ENCODE measurements at regions of chr19 and their contacts with region 1.

Region 1: GRCh38 chr19:42401365-42402303 is 11.5 kb upstream of the CNFN start:
- DNase-seq: peak; percentile 78 to 97
- H3K4me3 ChIP-seq: peak overlapping the region; percentile 67 to 90 (median 75)
- H3K27ac ChIP-seq: no peak overlapping the region
- H3K4me1 ChIP-seq: peaks cover 7 to 18% (median 12%) of the 10 kb centered on the region in 4 experiments; a peak in 6 of 7 replicates
- H3K27me3 ChIP-seq: peaks cover 0 to 10% (median 5%) of the 10 kb centered on the region in 4 experiments; a peak in 5 of 7 replicates
- CTCF ChIP-seq: peak; percentile 61 to 83 (median 79)
- EP300 ChIP-seq: peak in 1 of 2 experiments; percentile 59; a peak in 1 of 3 replicates
- POLR2A ChIP-seq: peak; percentile 38 to 49; a peak in 2 of 3 replicates
- RAD21 ChIP-seq: peak; percentile 45 to 61; a peak in 3 of 4 replicates

Region 2: GRCh38 chr19:42343344-42344110 is 58.1 kb before region 1 on chr19:
- CTCF ChIA-PET with region 1: interaction called, 13 read pairs
- POLR2A ChIA-PET with region 1: no interaction called
- DNase-seq: peak in 1 of 2 experiments; percentile 82
- H3K4me3 ChIP-seq: no peak overlapping the region
- H3K27ac ChIP-seq: no peak overlapping the region
- H3K4me1 ChIP-seq: no peaks in the 10 kb centered on the region
- H3K27me3 ChIP-seq: no peaks in the 10 kb centered on the region
- CTCF ChIP-seq: peak; percentile 89 to 99 (median 95)
- EP300 ChIP-seq: no peak
- POLR2A ChIP-seq: no peak
- RAD21 ChIP-seq: peak; percentile 25 to 55; a peak in 2 of 4 replicates

Region 3: DNA sequence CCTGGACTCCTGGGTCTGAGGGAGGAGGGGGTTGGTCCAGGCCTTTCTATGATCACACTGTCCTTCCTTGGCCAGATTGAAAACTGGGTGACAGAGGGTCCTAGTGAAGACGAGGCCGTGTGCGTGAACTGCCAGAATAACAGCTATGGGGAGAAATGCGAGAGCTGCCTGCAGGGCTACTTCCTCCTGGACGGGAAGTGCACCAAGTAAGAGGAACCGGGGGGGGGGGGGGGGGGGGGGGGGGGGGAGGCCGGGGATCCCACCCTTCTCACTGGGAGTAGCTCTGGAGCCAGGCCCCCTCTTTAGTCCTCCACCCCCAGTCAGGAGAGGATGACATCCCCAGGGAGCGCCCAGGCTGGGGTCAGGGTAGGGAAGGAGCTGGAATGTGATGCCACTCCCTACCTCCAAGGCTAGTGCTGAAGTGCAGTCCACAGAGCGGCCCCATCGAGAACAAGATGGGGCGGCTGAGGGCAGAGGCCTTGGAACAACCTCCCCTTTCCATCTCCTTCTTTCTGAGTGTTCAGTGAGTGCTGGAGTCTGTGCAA is 30.9 kb before region 1 on chr19:
- CTCF ChIA-PET with region 1: interaction called, 5 read pairs
- POLR2A ChIA-PET with region 1: interaction called, 13 read pairs
- DNase-seq: no peak
- H3K4me3 ChIP-seq: peak overlapping the region in 1 of 4 experiments; percentile 28; a peak in 1 of 8 replicates
- H3K27ac ChIP-seq: no peak overlapping the region; the same call in 1 of the 2 replicates
- H3K4me1 ChIP-seq: peaks cover 7 to 29% (median 22%) of the 10 kb centered on the region in 4 experiments
- H3K27me3 ChIP-seq: no peaks in the 10 kb centered on the region
- CTCF ChIP-seq: no peak
- EP300 ChIP-seq: no peak
- POLR2A ChIP-seq: no peak
- RAD21 ChIP-seq: no peak

Region 4: GRCh38 chr19:42378225-42379215 is 23.1 kb before region 1 on chr19:
- CTCF ChIA-PET with region 1: interaction called, 10 read pairs
- POLR2A ChIA-PET with region 1: interaction called, 23 read pairs
- DNase-seq: no peak
- H3K4me3 ChIP-seq: no peak overlapping the region
- H3K27ac ChIP-seq: no peak overlapping the region; the same call in 1 of the 2 replicates
- H3K4me1 ChIP-seq: peaks cover 0 to 3% (median 1%) of the 10 kb centered on the region in 4 experiments; a peak in 4 of 7 replicates
- H3K27me3 ChIP-seq: no peaks in the 10 kb centered on the region; a peak in 1 of 7 replicates
- CTCF ChIP-seq: no peak
- EP300 ChIP-seq: no peak
- POLR2A ChIP-seq: no peak
- RAD21 ChIP-seq: no peak

Region 5: DNA sequence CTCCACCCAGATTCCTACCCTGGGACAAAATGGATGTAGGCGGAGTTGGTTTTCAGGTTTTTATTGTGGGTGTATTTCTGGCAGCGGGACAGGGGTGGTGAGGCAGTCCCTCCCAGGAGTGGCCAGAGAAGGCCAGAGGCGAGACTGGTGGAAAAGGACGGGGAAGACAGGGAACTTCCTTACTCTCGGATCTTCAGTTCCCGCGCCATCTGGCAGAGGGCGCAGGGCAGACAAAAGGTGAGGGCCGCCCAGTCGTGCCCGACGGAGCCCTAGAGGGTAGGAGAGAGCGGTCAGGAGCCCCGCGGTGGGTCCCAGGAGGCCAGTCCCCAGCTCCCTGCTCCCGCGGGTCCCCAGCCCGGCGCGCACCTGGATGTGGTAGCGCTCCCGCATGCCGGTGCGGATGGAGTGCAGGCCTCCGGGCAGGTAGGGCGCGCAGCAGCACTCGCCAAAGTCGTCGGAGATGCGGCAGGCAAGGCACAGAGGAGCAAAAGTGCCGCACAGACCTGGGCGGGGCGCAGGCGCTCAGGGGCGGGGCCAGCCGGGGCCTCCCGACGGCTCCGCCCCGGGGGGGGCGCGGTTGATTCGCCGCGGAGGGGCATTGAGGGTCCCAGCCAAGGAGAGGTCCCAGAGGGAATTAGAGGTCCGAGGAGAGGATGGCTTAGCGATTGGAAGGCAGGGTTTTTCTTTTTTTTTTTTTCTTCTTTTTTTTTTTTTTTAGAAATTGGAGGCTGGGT is 14.5 kb before region 1 on chr19:
- CTCF ChIA-PET with region 1: interaction called, 15 read pairs
- POLR2A ChIA-PET with region 1: interaction called, 47 read pairs
- DNase-seq: peak in 1 of 2 experiments; percentile 94
- H3K4me3 ChIP-seq: peak overlapping the region; percentile 63 to 79 (median 64)
- H3K27ac ChIP-seq: peak overlapping the region; percentile 61; the same call in 1 of the 2 replicates
- H3K4me1 ChIP-seq: peaks cover 0 to 12% (median 4%) of the 10 kb centered on the region in 4 experiments; a peak in 5 of 7 replicates
- H3K27me3 ChIP-seq: peaks cover 0 to 10% (median 5%) of the 10 kb centered on the region in 4 experiments; a peak in 4 of 7 replicates
- CTCF ChIP-seq: peak; percentile 68 to 81 (median 70)
- EP300 ChIP-seq: no peak
- POLR2A ChIP-seq: peak in 1 of 2 experiments; percentile 89; a peak in 2 of 3 replicates
- RAD21 ChIP-seq: peak; percentile 18 to 39

Region 6: GRCh38 chr19:42423462-42424344 is 22.1 kb after region 1 on chr19:
- CTCF ChIA-PET with region 1: interaction called, 38 read pairs
- POLR2A ChIA-PET with region 1: interaction called, 17 read pairs
- DNase-seq: peak in 1 of 2 experiments; percentile 96
- H3K4me3 ChIP-seq: peak overlapping the region; percentile 58 to 68 (median 64)
- H3K27ac ChIP-seq: 0 out of 2 replicates have a peak overlapping the region, but pooled peaks have one; percentile 34
- H3K4me1 ChIP-seq: peaks cover 0 to 13% (median 4%) of the 10 kb centered on the region in 4 experiments; a peak in 5 of 7 replicates
- H3K27me3 ChIP-seq: peaks cover 13 to 41% (median 35%) of the 10 kb centered on the region in 4 experiments
- CTCF ChIP-seq: no peak
- EP300 ChIP-seq: no peak
- POLR2A ChIP-seq: peak in 1 of 2 experiments; percentile 69; a peak in 1 of 3 replicates
- RAD21 ChIP-seq: no peak

Region 7: DNA sequence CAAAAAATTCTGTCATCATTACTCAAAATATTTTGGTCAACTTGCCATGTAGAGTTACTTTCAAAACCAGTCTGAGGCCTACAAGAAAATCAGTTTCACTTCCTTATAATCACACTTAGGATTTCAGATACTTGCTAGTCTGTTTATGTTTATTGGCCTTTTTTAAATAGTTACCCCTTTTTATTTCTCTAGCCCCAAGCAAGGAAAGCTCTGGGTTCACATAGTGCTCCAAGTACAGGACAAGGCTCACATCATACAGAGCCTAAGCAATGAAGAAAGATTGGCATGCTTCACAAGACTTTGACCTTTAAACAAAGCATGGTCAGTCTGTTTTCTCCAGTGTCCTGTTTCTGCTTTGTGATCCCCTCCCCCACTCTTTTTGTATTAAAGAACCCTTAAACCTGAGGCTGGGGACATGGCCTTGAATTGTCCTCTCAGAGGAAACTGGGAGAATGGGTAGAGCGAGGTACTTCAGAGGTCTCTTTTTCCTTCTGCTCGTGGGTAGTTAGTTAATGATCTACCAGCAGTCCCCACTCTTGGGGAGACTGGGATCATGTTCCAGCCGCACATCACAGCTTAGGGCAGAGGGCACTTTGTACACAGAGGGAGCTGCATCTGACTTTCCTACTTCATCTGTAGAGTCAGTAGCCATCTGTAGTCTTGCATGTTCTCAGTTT is 96.0 kb after region 1 on chr19:
- CTCF ChIA-PET with region 1: no interaction called
- POLR2A ChIA-PET with region 1: no interaction called
- DNase-seq: no peak
- H3K4me3 ChIP-seq: no peak overlapping the region
- H3K27ac ChIP-seq: no peak overlapping the region
- H3K4me1 ChIP-seq: peaks cover 2 to 7% (median 4%) of the 10 kb centered on the region in 4 experiments
- H3K27me3 ChIP-seq: no peaks in the 10 kb centered on the region; a peak in 2 of 7 replicates
- CTCF ChIP-seq: no peak
- EP300 ChIP-seq: no peak
- POLR2A ChIP-seq: no peak
- RAD21 ChIP-seq: no peak